Cardiac septum (tissue), 1 donor: ENCODE measurements at regions of chr12 and their contacts with region 1.

Region 1: DNA sequence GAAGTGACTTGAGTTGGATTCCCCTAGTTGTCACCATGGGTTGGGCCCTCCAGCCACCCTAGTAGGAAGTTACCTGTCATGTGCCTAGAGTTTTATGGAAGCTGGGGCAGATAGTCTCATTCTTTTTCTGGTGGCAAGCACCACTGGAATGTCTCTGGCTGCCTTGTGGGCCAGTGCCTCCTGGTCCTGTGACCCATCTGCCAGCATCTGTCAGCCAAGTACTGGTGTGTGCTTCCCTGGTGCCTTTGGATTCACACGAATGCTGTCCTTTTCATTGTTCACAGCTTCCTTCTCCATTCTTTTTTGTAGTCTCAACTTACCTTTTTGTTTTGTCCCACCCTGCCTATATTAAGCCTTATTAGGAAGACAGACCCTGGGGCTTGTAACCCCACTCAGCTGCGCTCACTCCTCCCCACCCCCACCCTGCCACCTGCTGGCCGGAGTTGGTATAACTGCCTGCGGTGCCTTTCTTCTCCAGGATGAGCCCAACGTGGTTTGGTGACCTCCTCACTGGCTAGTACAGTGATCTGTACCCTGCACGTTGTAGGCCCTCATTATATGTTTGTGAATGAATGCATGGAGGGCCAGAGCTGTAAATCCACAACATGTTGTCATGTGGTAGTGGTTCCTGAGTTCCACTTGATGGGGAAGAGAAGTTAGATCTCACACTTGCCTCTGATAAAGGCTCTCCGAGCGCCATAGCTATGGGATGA is 125.7 kb downstream of the TSPAN9 start:
- DNase-seq: no peak

Region 2: GRCh38 chr12:3073438-3074250 is 129.2 kb before region 1 on chr12:
- intact Hi-C with region 1: loop called (anchors 1 kb)
- DNase-seq: peak; percentile 89

Region 3: GRCh38 chr12:3135522-3136461 is 67.1 kb before region 1 on chr12:
- intact Hi-C with region 1: loop called (anchors 1 kb)
- DNase-seq: no peak

Region 4: DNA sequence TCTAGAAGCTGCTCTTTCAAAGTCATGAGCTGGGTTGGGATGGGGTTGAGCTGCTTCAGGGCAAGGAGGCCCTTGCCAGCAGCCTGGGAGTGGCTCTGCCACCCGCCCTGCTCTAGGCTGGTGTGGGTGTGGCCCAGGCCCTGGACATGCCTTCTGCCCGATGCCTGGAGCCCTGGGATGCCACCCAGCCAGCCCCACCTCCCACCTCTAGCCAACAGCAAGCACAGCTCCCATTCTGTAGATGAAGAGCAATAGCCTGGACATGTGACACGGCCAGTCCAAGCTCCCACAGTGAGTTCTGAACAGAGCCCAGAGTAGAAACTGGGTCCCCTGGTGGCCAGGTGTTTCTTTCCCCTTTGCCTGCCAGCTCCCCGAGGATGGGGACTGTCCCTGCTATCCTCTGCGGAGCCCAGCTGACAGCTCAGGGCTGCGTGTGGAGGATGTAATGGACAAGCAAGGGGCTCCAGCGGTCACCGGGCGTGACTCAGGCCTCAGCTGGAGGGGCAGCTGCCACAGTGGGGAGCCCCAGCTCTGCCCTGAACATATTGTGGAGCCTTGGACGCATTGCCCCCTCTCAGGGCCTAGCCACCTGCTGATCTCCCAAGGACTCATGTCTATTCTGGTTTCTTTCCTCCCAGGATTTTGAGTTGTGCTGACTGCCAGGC is 39.4 kb after region 1 on chr12:
- intact Hi-C with region 1: loop called (anchors 5 kb)
- DNase-seq: peak; percentile 90

Region 5: DNA sequence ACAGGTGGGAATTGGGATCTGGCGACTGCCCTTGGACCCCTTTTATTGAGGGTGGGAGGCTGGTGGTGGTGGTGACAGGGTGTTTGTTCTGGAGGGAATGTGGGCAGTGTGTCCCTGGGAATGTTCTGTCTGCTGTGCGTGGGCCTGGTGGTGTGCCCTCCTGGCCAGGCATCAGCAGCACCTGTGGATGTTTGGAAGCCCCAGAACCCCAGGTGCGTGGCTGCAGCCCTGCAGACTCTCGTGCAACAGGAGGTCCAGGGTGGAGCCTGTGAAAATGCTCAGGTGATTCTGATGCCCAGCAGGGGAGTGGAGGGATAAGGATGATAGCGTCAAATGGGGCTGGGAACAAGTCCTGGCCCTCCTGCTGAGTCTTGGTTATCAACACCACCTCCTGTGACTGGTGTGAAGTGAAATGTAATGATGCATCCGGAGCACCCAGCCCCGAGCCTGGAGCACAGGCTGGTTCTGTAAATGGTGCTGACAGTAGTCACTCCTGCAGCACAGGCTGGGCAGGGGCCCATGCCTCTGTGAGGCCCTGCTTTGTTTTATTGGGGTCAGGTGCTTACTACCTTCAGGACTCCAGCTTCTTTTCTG is 50.9 kb after region 1 on chr12:
- intact Hi-C with region 1: loop called (anchors 1 kb)
- DNase-seq: no peak

Region 6: GRCh38 chr12:3275171-3276041 is 72.5 kb after region 1 on chr12:
- intact Hi-C with region 1: loop called (anchors 2 kb)
- DNase-seq: peak; percentile 88